ENCODE measurements at regions of chrX and their contacts with region 1.

Region 1: GRCh38 chrX:40539214-40540142 is 41.3 kb upstream of the ATP6AP2 start:
- DNase-seq: peak; percentile 49
- CTCF ChIP-seq: peak; percentile 8

Region 2: GRCh38 chrX:39320165-39320564 is 1219.3 kb before region 1 on chrX:
- in situ Hi-C with region 1: no loop called
- DNase-seq: no peak
- CTCF ChIP-seq: no peak

Region 3: DNA sequence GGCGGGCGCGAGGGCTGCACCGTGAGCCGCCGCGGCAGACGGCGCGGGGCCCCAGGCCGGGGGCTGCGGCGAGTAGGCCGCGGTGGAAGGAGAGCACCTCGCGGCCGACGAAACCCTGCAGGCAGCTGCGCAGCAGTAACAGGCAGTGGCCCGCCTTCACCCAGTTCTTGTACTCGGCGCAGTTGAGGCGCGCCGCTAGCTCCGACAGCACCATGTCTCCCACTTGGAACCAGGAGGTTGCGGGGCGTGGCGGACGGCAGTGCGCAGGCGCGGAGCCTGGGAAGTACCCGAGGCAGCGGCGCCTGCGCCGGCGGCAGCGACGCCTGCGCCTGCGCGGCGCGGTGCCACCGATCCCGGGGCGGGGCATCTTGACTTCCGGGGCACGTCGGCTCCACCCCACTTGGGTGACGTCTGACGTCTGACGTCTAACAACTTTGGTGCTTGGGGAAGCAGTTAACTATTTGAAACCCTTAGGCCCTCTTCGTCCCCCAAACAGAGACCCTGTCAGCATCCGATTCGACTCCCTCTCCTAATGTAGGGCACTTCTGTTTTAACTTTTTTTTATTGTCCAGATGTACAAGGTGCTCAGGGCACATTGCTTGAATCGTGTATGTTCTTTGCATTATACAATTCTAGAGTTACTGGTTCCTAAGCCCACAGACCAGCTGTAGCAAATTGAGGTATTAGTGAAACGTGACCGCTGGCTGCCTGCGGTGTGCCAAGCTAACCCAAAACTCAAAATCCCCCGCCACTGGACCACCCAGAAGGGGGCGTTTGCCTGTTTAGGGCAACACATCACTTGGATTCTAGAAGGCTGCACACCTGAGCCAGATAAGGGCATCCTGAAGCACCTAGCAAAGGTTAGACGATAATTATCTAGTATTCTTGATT is 108.1 kb after region 1 on chrX and contains the start of gene CXorf38:
- in situ Hi-C with region 1: loop called (anchors 10 kb)
- DNase-seq: peak; percentile 92
- CTCF ChIP-seq: no peak

Region 4: GRCh38 chrX:41116948-41117347 is 577.5 kb after region 1 on chrX:
- in situ Hi-C with region 1: loop called (anchors 10 kb)
- DNase-seq: peak; percentile 46
- CTCF ChIP-seq: no peak

Measured in GM13976 (cell line).